ENCODE measurements at regions of chr7 and their contacts with region 1.

Region 1: DNA sequence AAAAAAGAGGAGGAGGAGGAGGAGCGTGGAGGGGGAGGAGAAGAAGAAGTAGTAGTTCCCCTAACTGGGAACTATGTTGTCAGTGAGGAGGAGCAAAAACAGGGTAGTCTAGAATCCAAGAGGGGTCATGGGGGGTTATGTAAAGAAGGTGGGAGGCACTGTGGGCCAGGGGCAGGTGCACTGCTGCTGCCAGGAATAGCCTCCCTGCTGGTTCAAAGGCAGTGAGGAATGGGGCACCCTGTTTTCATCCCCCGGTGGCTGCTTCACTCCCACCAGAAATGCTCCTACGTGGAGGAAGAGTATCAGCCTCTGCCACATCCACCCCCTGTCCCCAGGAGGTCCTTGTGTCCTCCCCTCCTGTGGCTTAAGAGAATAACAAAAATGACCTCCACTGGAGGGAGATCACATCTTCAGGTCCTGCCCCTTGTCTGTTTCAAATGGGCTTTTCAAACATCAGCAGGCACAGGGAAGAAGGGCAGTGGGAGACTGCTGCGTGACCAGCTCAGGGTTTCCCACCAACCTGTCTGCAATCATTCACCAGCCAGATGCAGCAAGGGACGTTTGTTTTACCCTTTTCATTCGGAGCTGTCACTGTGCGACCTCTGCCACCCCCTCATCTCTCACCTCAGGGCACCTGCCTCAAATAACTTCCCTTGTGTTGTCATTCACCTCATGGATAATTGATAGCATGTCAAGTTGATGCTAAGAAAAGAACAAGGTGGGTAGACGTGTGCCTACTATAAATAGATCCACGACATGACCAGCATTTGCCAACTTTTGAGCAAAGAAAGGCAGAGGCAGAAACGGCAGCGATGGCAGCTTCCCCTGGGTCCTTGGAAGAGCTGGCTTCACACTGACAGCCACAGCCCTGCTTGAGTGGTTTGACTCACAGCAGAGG is 92.6 kb downstream of the DGKI start:
- DNase-seq: peak; percentile 27
- ATAC-seq: peak; percentile 72
- H3K4me3 ChIP-seq: no peak overlapping the region
- H3K27ac ChIP-seq: no peak overlapping the region
- H3K4me1 ChIP-seq: no peaks in the 10 kb centered on the region; the same call in 1 of the 2 replicates
- H3K27me3 ChIP-seq: no peaks in the 10 kb centered on the region; a peak in 1 of 4 replicates
- CTCF ChIP-seq: no peak
- EP300 ChIP-seq: peak; percentile 76 to 92; a peak in 2 of 4 replicates
- POLR2A ChIP-seq: no peak
- RAD21 ChIP-seq: no peak; the same call in 1 of the 2 replicates

Region 2: GRCh38 chr7:137642472-137642871 is 111.7 kb before region 1 on chr7:
- CTCF ChIA-PET with region 1: no interaction called
- POLR2A ChIA-PET with region 1: no interaction called
- RAD21 ChIA-PET with region 1: no interaction called
- SMC1A ChIA-PET with region 1: no interaction called
- in situ Hi-C with region 1: no loop called
- intact Hi-C with region 1: no loop called
- DNase-seq: no peak
- ATAC-seq: no peak
- H3K4me3 ChIP-seq: no peak overlapping the region
- H3K27ac ChIP-seq: no peak overlapping the region
- H3K4me1 ChIP-seq: no peaks in the 10 kb centered on the region
- H3K27me3 ChIP-seq: no peaks in the 10 kb centered on the region
- CTCF ChIP-seq: no peak
- EP300 ChIP-seq: no peak
- POLR2A ChIP-seq: no peak
- RAD21 ChIP-seq: no peak

Region 3: DNA sequence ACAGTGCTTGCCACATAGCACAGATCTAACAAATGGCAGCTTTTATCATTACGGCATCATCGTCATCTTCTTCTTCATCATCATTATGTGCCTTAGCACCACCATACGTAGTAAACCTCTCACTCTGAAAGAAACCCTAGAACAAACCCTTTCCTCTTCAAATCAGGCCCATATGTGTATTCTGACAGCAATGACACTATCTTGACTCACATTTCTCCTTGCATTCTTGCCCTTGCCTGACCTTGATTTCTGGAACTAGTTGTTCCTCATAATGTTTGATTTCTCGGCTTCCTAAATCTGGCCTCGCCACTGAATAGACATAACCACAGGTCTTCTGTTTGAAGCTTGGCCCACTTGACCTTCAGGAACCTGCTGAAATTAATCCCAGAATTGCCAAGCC is 22.8 kb before region 1 on chr7:
- CTCF ChIA-PET with region 1: interaction called, 6 read pairs
- POLR2A ChIA-PET with region 1: interaction called, 4 read pairs
- RAD21 ChIA-PET with region 1: interaction called, 3 read pairs
- SMC1A ChIA-PET with region 1: interaction called, 14 read pairs
- in situ Hi-C with region 1: no loop called
- intact Hi-C with region 1: no loop called
- DNase-seq: no peak
- ATAC-seq: no peak
- H3K4me3 ChIP-seq: no peak overlapping the region
- H3K27ac ChIP-seq: no peak overlapping the region
- H3K4me1 ChIP-seq: no peaks in the 10 kb centered on the region
- H3K27me3 ChIP-seq: no peaks in the 10 kb centered on the region
- CTCF ChIP-seq: no peak
- EP300 ChIP-seq: no peak
- POLR2A ChIP-seq: no peak
- RAD21 ChIP-seq: no peak

Region 4: DNA sequence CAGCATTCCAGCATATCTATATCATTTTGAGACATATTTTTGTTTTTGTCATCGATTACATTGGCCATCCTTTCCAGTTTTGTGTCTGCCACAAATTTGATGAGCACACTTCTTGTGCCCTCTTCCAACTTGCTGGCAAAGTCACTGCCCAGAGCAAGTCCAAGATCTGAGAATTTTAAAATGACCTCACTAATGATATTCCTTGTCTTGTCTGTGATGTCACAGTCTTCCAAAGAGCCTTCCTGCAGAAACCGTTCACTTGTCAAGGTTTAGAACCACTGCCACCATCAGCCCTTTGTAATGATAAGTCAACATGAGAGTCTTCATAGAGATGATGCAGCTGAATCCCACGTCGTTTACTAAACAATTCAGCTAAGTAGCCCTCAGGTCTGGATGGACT is 11.2 kb after region 1 on chr7:
- CTCF ChIA-PET with region 1: interaction called, 21 read pairs
- POLR2A ChIA-PET with region 1: interaction called, 34 read pairs
- RAD21 ChIA-PET with region 1: interaction called, 72 read pairs
- SMC1A ChIA-PET with region 1: interaction called, 94 read pairs
- in situ Hi-C with region 1: no loop called
- intact Hi-C with region 1: no loop called
- DNase-seq: no peak
- ATAC-seq: no peak
- H3K4me3 ChIP-seq: no peak overlapping the region
- H3K27ac ChIP-seq: no peak overlapping the region
- H3K4me1 ChIP-seq: no peaks in the 10 kb centered on the region
- H3K27me3 ChIP-seq: no peaks in the 10 kb centered on the region
- CTCF ChIP-seq: no peak
- EP300 ChIP-seq: no peak
- POLR2A ChIP-seq: no peak
- RAD21 ChIP-seq: no peak

Region 5: GRCh38 chr7:137798073-137798763 is 44.0 kb after region 1 on chr7:
- CTCF ChIA-PET with region 1: interaction called, 3 read pairs
- POLR2A ChIA-PET with region 1: interaction called, 3 read pairs
- RAD21 ChIA-PET with region 1: interaction called, 7 read pairs
- SMC1A ChIA-PET with region 1: interaction called, 15 read pairs
- in situ Hi-C with region 1: no loop called
- intact Hi-C with region 1: no loop called
- DNase-seq: peak; percentile 59
- ATAC-seq: peak; percentile 96
- H3K4me3 ChIP-seq: no peak overlapping the region
- H3K27ac ChIP-seq: no peak overlapping the region; the same call in 1 of the 2 replicates
- H3K4me1 ChIP-seq: no peaks in the 10 kb centered on the region
- H3K27me3 ChIP-seq: no peaks in the 10 kb centered on the region
- CTCF ChIP-seq: no peak
- EP300 ChIP-seq: peak; percentile 48 to 84; a peak in 3 of 4 replicates
- POLR2A ChIP-seq: no peak
- RAD21 ChIP-seq: no peak

Region 6: DNA sequence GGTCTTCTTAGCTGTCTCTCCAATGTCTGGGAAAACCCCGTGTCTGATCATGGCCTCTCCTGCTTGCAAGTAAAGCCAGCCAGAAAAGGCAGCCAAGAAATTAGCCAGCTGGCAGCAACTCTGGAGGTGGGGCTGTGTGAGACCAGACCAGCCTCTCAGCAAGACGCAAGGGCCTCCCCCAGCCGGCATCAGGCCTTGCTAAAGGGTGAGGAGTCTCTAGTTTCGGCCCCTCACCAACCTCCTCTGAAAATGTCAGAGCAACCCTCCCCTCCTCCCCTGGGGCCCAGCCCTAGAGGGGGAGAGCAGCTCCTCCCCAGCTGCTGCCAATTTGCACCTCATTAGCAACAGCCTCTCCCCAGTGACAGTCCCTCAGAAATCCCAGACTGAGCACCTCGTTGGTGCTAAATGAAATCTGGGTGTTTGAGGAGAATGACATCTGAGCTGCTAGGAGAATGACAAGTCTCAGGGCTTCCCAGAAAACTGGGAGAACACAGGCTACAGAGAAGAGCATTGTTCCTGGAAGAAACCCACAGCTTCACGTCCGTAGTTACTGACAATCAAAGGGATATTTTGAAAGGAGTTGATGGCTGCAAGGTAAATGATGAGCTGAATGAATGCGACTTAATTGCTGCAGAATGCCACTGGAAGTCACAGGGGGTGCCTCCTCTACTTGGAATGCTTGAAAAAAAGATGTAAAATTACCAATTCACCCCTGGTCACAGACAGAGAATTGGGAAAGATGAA is 66.6 kb after region 1 on chr7:
- CTCF ChIA-PET with region 1: interaction called, 3 read pairs
- POLR2A ChIA-PET with region 1: interaction called, 7 read pairs
- RAD21 ChIA-PET with region 1: interaction called, 27 read pairs
- SMC1A ChIA-PET with region 1: interaction called, 31 read pairs
- in situ Hi-C with region 1: no loop called
- intact Hi-C with region 1: no loop called
- DNase-seq: no peak
- ATAC-seq: peak; percentile 91
- H3K4me3 ChIP-seq: no peak overlapping the region
- H3K27ac ChIP-seq: no peak overlapping the region
- H3K4me1 ChIP-seq: peaks cover 6% of the 10 kb centered on the region
- H3K27me3 ChIP-seq: no peaks in the 10 kb centered on the region
- CTCF ChIP-seq: no peak
- EP300 ChIP-seq: no peak; a peak in 1 of 4 replicates
- POLR2A ChIP-seq: no peak
- RAD21 ChIP-seq: no peak

Region 7: GRCh38 chr7:137846827-137847567 is 92.8 kb after region 1 on chr7 and contains the start of gene DGKI:
- CTCF ChIA-PET with region 1: interaction called, 3 read pairs
- POLR2A ChIA-PET with region 1: no interaction called
- RAD21 ChIA-PET with region 1: interaction called, 8 read pairs
- SMC1A ChIA-PET with region 1: interaction called, 28 read pairs
- in situ Hi-C with region 1: no loop called
- intact Hi-C with region 1: no loop called
- DNase-seq: no peak
- ATAC-seq: peak; percentile 67
- H3K4me3 ChIP-seq: peak within 1 kb of the TSS; percentile 17; the same call in 1 of the 2 replicates
- H3K27ac ChIP-seq: no peak within 1 kb of the TSS
- H3K4me1 ChIP-seq: no peaks in the 10 kb centered on the region
- H3K27me3 ChIP-seq: peaks cover 1 to 14% of the 10 kb centered on the region in 2 experiments; a peak in 2 of 4 replicates
- CTCF ChIP-seq: no peak
- EP300 ChIP-seq: no peak
- POLR2A ChIP-seq: peak; percentile 51
- RAD21 ChIP-seq: no peak
- polyA plus RNA-seq, gene DGKI: 28.3 to 37.1 TPM

Region 8: DNA sequence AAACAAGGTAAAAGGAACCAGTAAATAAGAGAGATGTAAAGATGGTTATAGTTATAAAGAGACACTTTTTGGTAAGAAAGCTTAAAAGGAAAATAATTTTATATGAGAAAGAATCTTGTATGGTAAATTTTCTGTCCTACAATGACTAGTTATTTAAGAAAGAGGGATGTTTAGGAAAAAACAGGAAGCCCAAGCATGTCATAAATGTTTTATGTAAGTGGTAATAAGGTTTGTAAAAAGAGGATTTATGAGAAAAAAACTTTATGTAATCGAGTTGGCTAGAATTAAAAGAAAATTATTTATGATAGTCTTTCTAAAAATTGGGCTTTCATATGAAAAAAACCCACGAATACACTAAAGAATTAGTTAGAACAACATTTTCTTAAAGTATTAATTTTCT is 281.9 kb after region 1 on chr7:
- CTCF ChIA-PET with region 1: no interaction called
- POLR2A ChIA-PET with region 1: no interaction called
- RAD21 ChIA-PET with region 1: no interaction called
- SMC1A ChIA-PET with region 1: no interaction called
- in situ Hi-C with region 1: no loop called
- intact Hi-C with region 1: no loop called
- DNase-seq: no peak
- ATAC-seq: no peak
- H3K4me3 ChIP-seq: no peak overlapping the region
- H3K27ac ChIP-seq: no peak overlapping the region
- H3K4me1 ChIP-seq: peaks cover 14% of the 10 kb centered on the region
- H3K27me3 ChIP-seq: no peaks in the 10 kb centered on the region
- CTCF ChIP-seq: no peak
- EP300 ChIP-seq: no peak
- POLR2A ChIP-seq: no peak
- RAD21 ChIP-seq: no peak

Region 9: GRCh38 chr7:138483531-138483930 is 729.3 kb after region 1 on chr7:
- CTCF ChIA-PET with region 1: no interaction called
- POLR2A ChIA-PET with region 1: no interaction called
- RAD21 ChIA-PET with region 1: no interaction called
- SMC1A ChIA-PET with region 1: no interaction called
- in situ Hi-C with region 1: no loop called
- intact Hi-C with region 1: no loop called
- DNase-seq: no peak
- ATAC-seq: peak; percentile 38
- H3K4me3 ChIP-seq: no peak overlapping the region
- H3K27ac ChIP-seq: no peak overlapping the region
- H3K4me1 ChIP-seq: peaks cover 9% of the 10 kb centered on the region
- H3K27me3 ChIP-seq: no peaks in the 10 kb centered on the region
- CTCF ChIP-seq: no peak
- EP300 ChIP-seq: no peak
- POLR2A ChIP-seq: no peak
- RAD21 ChIP-seq: no peak

Measured in GM12878 (cell line).